ENCODE measurements at regions of chr14 and their contacts with region 1.

Region 1: GRCh38 chr14:64503478-64504309 is at the start of gene ZBTB25:
- DNase-seq: peak; percentile 89
- H3K4me3 ChIP-seq: peak within 1 kb of the TSS; percentile 78 to 89 (median 84)
- H3K27ac ChIP-seq: peak within 1 kb of the TSS; percentile 93
- H3K4me1 ChIP-seq: peaks cover 40% of the 10 kb centered on the region
- H3K27me3 ChIP-seq: no peaks in the 10 kb centered on the region
- CTCF ChIP-seq: no peak
- total RNA-seq, gene ZBTB25: 9.7 to 10.8 TPM

Region 2: GRCh38 chr14:64387694-64388532 is 115.8 kb before region 1 on chr14 and contains the start of gene MTHFD1:
- CTCF ChIA-PET with region 1: no interaction called
- dilution Hi-C with region 1: no loop called
- in situ Hi-C with region 1: no loop called
- intact Hi-C with region 1: loop called (anchors 5 kb)
- DNase-seq: peak; percentile 99
- H3K4me3 ChIP-seq: peak within 1 kb of the TSS; percentile 69 to 92 (median 88)
- H3K27ac ChIP-seq: peak within 1 kb of the TSS; percentile 75
- H3K4me1 ChIP-seq: no peaks in the 10 kb centered on the region
- H3K27me3 ChIP-seq: no peaks in the 10 kb centered on the region
- CTCF ChIP-seq: no peak
- total RNA-seq, gene MTHFD1: 39.5 to 117 TPM

Region 3: DNA sequence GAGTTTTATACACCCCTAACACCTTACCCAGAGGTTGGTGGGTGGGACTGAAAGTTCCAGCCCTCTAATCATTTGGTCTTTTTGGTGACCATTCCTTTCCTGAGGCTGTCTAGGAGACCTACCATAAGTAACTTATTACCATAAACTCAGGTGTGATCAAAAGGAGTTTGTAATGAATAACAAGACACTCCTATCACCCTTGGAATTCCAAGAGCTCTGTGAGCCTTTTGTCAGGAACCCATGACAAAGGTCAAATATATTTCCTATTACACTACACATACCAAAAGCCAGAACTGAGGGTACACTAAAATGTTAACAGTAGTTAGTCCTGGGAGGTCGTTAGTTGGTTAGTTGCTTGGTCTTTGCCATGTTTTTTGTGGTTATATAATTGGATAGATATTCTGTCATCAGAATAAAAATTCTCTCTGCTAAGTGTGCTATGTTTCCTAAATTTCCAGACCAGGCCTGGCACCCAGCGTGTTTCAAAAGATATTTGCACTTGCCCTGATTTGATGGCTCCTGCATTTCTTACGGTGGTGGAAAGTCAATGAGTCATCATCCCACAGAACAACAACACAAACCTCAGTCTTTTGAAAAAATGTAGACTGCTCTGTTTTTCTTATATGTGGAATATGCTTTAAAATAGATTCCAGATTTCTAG is 65.4 kb before region 1 on chr14:
- CTCF ChIA-PET with region 1: no interaction called
- dilution Hi-C with region 1: loop called (anchors 5 kb)
- in situ Hi-C with region 1: no loop called
- intact Hi-C with region 1: no loop called
- DNase-seq: peak; percentile 75
- H3K4me3 ChIP-seq: no peak overlapping the region
- H3K27ac ChIP-seq: peak overlapping the region; percentile 11
- H3K4me1 ChIP-seq: peaks cover 20% of the 10 kb centered on the region
- H3K27me3 ChIP-seq: no peaks in the 10 kb centered on the region
- CTCF ChIP-seq: no peak

Region 4: GRCh38 chr14:64636208-64636979 is 132.7 kb after region 1 on chr14:
- CTCF ChIA-PET with region 1: no interaction called
- dilution Hi-C with region 1: no loop called
- in situ Hi-C with region 1: no loop called
- intact Hi-C with region 1: loop called (anchors 1 kb)
- DNase-seq: peak; percentile 29
- H3K4me3 ChIP-seq: no peak overlapping the region
- H3K27ac ChIP-seq: no peak overlapping the region
- H3K4me1 ChIP-seq: peaks cover 16% of the 10 kb centered on the region
- H3K27me3 ChIP-seq: no peaks in the 10 kb centered on the region
- CTCF ChIP-seq: peak; percentile 71 to 81

Region 5: GRCh38 chr14:64764641-64765520 is 261.2 kb after region 1 on chr14:
- CTCF ChIA-PET with region 1: no interaction called
- dilution Hi-C with region 1: no loop called
- in situ Hi-C with region 1: loop called in 1 of 2 experiments (anchors 25 kb)
- intact Hi-C with region 1: loop called (anchors 10 kb)
- DNase-seq: peak; percentile 61
- H3K4me3 ChIP-seq: no peak overlapping the region
- H3K27ac ChIP-seq: no peak overlapping the region
- H3K4me1 ChIP-seq: peaks cover 45% of the 10 kb centered on the region
- H3K27me3 ChIP-seq: no peaks in the 10 kb centered on the region
- CTCF ChIP-seq: peak; percentile 80 to 92